ENCODE measurements at regions of chr1 and their contacts with region 1.

Region 1: GRCh38 chr1:223133824-223134435 is 9.1 kb downstream of the TLR5 start:
- DNase-seq: peak; percentile 85
- H3K4me3 Mint-ChIP-seq: peak overlapping the region; percentile 16
- H3K27ac Mint-ChIP-seq: no peak overlapping the region
- H3K4me1 Mint-ChIP-seq: peaks cover 14% of the 10 kb centered on the region
- H3K27me3 Mint-ChIP-seq: peaks cover 12% of the 10 kb centered on the region

Region 2: GRCh38 chr1:223114871-223115270 is 19.1 kb before region 1 on chr1:
- CTCF ChIA-PET with region 1: interaction called, 122 read pairs
- POLR2A ChIA-PET with region 1: no interaction called
- intact Hi-C with region 1: no loop called
- DNase-seq: no peak
- H3K4me3 Mint-ChIP-seq: no peak overlapping the region
- H3K27ac Mint-ChIP-seq: no peak overlapping the region
- H3K4me1 Mint-ChIP-seq: no peaks in the 10 kb centered on the region
- H3K27me3 Mint-ChIP-seq: no peaks in the 10 kb centered on the region

Region 3: GRCh38 chr1:223149046-223149445 is 15.1 kb after region 1 on chr1:
- CTCF ChIA-PET with region 1: interaction called, 60 read pairs
- POLR2A ChIA-PET with region 1: interaction called, 3 read pairs
- intact Hi-C with region 1: no loop called
- DNase-seq: no peak
- H3K4me3 Mint-ChIP-seq: no peak overlapping the region
- H3K27ac Mint-ChIP-seq: no peak overlapping the region
- H3K4me1 Mint-ChIP-seq: peaks cover 17% of the 10 kb centered on the region
- H3K27me3 Mint-ChIP-seq: peaks cover 3% of the 10 kb centered on the region

Region 4: GRCh38 chr1:223358826-223359225 is 224.9 kb after region 1 on chr1:
- CTCF ChIA-PET with region 1: interaction called, 17 read pairs
- POLR2A ChIA-PET with region 1: no interaction called
- intact Hi-C with region 1: no loop called
- DNase-seq: no peak
- H3K4me3 Mint-ChIP-seq: no peak overlapping the region
- H3K27ac Mint-ChIP-seq: no peak overlapping the region
- H3K4me1 Mint-ChIP-seq: peaks cover 13% of the 10 kb centered on the region
- H3K27me3 Mint-ChIP-seq: peaks cover 7% of the 10 kb centered on the region

Region 5: DNA sequence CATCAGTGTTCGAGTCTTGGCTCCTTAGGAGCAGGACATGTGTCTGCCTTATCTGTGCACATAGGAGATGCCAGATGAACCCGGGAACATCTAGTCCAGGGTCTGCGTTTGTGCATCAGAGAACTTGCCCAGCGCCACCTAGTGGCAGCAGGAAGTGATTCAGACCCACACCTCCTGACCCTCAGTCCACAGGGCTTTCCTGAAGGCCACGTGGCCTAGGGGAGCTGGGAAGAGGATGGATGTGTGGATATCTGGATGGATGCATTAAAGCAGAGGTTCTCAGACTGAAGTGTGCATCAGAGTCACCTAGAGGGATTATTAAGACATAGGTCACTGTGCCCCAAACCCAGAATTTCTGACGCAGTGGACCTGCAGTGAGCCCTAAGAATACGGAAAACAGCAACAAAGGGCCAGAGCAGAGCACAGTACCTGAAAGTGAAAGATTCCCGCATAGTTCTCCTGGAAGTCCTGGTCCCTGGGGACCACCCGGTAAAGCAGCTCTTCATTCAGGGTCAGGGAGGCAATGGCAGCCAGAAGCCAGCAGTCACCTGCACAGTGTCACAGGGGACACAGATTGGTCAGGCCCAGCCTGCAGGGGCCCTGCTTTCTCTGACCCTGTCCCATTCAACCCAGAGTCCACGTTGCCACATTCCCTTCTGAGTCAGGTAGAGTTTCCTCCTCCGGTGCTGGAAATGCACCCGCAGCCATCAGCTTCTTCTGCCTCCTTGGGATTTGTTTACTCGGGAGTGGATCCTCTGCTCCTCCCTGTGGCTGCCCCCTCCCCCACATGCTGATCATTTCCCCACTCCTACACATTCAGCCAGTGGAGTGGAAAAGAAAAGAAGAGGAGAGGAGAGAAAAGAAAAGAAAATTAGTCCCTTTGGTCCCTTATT is 494.5 kb after region 1 on chr1:
- CTCF ChIA-PET with region 1: interaction called, 21 read pairs
- POLR2A ChIA-PET with region 1: no interaction called
- intact Hi-C with region 1: no loop called
- DNase-seq: peak; percentile 60
- H3K4me3 Mint-ChIP-seq: no peak overlapping the region
- H3K27ac Mint-ChIP-seq: no peak overlapping the region
- H3K4me1 Mint-ChIP-seq: no peaks in the 10 kb centered on the region
- H3K27me3 Mint-ChIP-seq: no peaks in the 10 kb centered on the region

Region 6: DNA sequence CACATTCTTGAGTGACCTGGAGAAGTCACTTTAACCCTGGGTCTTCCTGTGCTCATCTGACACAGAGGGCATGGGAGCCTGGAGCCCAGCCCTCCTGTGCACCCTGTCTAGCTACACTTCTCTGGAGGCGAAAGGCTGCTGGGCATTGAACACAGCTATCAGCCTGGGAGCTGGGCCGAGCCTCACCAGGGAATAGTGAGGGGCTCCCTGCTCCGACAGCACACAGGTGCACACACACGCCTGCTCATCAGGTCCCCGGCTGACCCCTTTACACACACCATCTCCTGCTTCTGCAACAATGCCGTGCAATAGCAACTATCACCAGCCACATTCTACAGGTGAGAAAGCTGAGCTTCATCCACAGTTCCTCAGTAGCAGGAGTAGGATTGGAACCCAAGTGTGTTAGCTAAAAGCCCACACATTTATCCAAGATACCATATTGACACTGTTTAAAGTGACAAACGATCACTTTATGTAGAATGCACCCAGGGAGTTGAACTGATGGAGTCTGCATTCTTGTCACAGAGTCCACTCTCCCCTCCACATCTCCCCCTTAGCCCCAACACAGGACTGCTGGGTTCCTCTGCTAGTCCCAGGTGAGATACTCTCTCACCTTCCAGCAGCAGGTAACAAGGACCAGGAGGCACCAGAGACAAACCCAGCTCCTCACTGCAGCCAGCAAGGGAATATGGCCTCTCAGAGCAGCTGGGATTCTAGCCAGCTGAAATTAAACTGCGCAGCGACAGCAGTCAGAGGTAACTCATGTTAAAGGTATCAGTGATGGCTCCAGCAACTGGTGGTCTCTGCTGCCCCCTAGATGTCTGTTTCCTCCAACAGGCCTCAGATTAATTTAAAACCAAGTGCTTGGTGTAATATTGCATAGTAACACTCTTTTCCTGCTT is 549.9 kb after region 1 on chr1:
- CTCF ChIA-PET with region 1: interaction called, 31 read pairs
- POLR2A ChIA-PET with region 1: no interaction called
- intact Hi-C with region 1: loop called (anchors 5 kb)
- DNase-seq: peak; percentile 64
- H3K4me3 Mint-ChIP-seq: no peak overlapping the region
- H3K27ac Mint-ChIP-seq: no peak overlapping the region
- H3K4me1 Mint-ChIP-seq: no peaks in the 10 kb centered on the region
- H3K27me3 Mint-ChIP-seq: peaks cover 2% of the 10 kb centered on the region

Measured in activated CD4-positive, alpha-beta memory T cell treated with anti-CD3 and anti-CD28 coated beads for 36 hours (primary cell).